Sciatic nerve (tissue), 2 donors: ENCODE measurements at regions of chr5 and their contacts with region 1.

Region 1: GRCh38 chr5:159106569-159107282 is 7.0 kb upstream of the EBF1 start:
- DNase-seq: peak; percentile 92
- ATAC-seq: peak; percentile 93

Region 2: GRCh38 chr5:158174918-158175851 is 931.5 kb before region 1 on chr5:
- intact Hi-C with region 1: loop called (anchors 10 kb)
- DNase-seq: peak; percentile 88
- ATAC-seq: peak; percentile 93

Region 3: GRCh38 chr5:158880483-158881001 is 226.2 kb before region 1 on chr5:
- intact Hi-C with region 1: loop called (anchors 10 kb)
- DNase-seq: no peak
- ATAC-seq: no peak